ENCODE measurements at regions of chr1 and their contacts with region 1.

Region 1: DNA sequence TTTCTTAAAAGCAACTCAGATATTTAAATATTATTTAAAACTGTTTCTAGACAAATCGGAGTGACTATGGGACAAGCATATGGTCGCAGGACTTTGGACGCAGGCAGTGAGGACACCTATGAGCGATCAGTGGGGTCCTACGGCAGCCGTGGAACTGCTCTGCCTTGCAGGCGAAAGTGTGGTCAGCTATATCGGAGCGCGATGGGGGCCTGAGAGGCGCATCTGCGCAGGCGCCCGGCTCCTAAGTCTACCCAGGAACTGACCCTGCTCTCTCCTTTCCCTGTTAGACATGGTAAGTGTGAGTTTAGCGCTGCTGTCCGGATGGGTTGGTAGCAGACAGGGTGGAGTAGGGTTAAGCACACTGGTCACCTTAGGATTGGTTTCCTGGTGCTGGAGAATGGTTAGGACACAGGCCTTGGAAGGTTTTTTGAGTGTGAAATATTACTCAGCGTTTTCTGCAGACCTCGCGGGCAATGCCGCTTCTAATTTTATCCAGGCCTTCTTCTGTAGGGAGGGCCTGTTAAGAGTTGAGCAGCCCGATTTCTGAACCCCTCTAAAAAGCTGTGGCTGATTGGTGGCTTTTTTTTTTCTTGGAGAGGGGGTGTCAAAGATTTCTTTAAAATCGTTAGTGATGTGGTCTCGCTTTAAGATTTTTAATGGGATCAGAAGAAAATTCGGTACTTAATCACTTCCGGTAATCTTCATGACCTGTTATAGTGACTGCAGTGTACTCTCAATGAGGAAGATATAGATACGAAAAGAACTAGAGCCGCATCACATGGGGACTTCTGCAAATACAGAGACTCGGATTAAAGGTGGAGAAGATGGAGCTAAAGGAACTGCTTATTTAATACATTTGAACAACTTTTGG is at the start of gene RABGGTB:
- DNase-seq: peak; percentile 99
- H3K4me3 ChIP-seq: peak within 1 kb of the TSS; percentile 62 to 99 (median 96)
- H3K27ac ChIP-seq: peak within 1 kb of the TSS; percentile 83
- H3K4me1 ChIP-seq: peaks cover 33% of the 10 kb centered on the region
- H3K27me3 ChIP-seq: no peaks in the 10 kb centered on the region
- CTCF ChIP-seq: no peak
- POLR2A ChIP-seq: peak; percentile 100
- total RNA-seq, gene RABGGTB: 103 and 114 TPM in 2 replicates

Region 2: GRCh38 chr1:74236440-74236839 is 1549.8 kb before region 1 on chr1:
- CTCF ChIA-PET with region 1: no interaction called
- POLR2A ChIA-PET with region 1: no interaction called
- dilution Hi-C with region 1: no loop called
- intact Hi-C with region 1: no loop called
- DNase-seq: no peak
- H3K4me3 ChIP-seq: no peak overlapping the region
- H3K27ac ChIP-seq: no peak overlapping the region
- H3K4me1 ChIP-seq: no peaks in the 10 kb centered on the region
- H3K27me3 ChIP-seq: no peaks in the 10 kb centered on the region
- CTCF ChIP-seq: no peak
- POLR2A ChIP-seq: no peak

Region 3: DNA sequence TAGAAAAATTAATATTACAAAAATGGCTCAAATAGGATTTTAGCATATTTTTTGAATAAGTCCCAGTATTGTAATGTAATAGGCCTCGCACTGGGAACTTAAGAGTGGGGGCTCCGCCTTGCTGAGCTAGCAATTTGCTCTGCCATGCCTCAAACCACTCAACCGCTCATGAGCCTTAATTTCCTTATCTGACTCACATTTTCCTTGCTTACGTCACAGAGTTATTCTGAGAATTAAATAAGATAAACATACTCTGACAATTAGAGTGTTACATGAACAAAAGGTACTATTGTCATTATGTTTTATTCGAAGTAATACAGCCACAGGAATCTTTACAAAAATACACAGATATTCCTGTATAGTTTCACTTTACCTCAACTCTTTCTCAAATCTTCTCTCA is 283.4 kb before region 1 on chr1:
- CTCF ChIA-PET with region 1: no interaction called
- POLR2A ChIA-PET with region 1: no interaction called
- dilution Hi-C with region 1: no loop called
- intact Hi-C with region 1: no loop called
- DNase-seq: peak; percentile 94
- H3K4me3 ChIP-seq: peak overlapping the region in 1 of 3 experiments; percentile 11
- H3K27ac ChIP-seq: peak overlapping the region; percentile 85
- H3K4me1 ChIP-seq: peaks cover 13% of the 10 kb centered on the region
- H3K27me3 ChIP-seq: no peaks in the 10 kb centered on the region
- CTCF ChIP-seq: no peak
- POLR2A ChIP-seq: no peak

Region 4: DNA sequence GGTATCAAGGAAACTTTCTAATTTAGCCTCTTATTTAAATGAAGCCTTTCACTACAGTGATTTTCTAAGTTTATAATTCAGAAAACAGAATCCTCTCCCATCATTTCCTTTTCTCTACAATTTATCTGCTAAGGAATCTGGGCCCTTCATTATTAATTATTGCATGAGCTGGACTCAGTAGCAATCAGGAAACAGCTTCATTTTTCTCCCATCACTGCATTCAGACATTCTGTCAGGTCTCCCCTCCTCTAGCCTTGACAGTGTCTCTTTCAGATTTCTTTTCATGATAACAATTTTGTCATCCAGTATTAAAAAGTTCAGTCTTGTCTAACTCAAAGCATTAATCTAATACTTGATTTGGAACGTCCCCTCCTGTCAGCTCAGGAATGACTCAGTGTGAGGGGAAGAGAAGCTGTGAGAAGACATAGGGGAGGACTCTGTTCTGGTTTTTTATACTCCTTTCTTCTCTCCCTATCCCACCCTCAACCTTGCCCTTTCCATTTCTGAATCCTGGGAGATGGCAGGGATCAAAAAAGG is 203.4 kb before region 1 on chr1:
- CTCF ChIA-PET with region 1: no interaction called
- POLR2A ChIA-PET with region 1: no interaction called
- dilution Hi-C with region 1: no loop called
- intact Hi-C with region 1: no loop called
- DNase-seq: peak; percentile 52
- H3K4me3 ChIP-seq: no peak overlapping the region
- H3K27ac ChIP-seq: no peak overlapping the region
- H3K4me1 ChIP-seq: peaks cover 28% of the 10 kb centered on the region
- H3K27me3 ChIP-seq: no peaks in the 10 kb centered on the region
- CTCF ChIP-seq: peak in 1 of 2 donors; percentile 19
- POLR2A ChIP-seq: no peak

Region 5: DNA sequence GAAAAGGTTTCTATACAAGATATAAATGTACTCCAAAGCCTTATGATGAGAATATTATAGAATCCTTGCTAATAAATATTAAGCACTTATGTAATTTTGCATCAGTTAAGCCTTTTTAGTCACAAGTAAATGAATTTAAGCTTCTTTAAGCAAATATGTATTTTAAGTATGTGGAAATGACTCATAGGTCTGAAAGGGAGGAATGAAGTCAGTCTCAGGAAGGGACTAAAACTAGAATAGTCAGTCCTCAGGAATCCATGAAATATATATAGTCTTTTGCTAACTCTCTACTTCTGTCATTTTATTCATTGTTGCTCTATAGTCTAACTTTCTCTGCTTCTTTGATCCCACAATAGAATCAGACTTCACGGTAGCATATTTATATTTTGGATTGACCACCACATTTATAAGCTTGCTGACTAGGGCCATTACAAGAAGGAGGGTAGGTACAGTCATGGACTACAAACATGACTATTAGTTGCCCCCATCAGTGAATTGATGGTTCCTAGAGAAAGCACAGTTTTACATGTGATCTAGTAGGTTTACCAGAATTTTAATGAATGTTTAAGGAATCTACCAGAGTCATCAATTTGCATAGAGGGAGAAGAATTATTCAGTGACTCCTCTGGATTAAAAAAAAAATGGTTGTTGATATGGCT is 20.4 kb before region 1 on chr1:
- CTCF ChIA-PET with region 1: interaction called, 8 read pairs
- POLR2A ChIA-PET with region 1: interaction called, 3 read pairs
- dilution Hi-C with region 1: no loop called
- intact Hi-C with region 1: loop called (anchors 1 kb)
- DNase-seq: peak; percentile 78
- H3K4me3 ChIP-seq: peak overlapping the region in 1 of 3 experiments; percentile 27
- H3K27ac ChIP-seq: peak overlapping the region; percentile 86
- H3K4me1 ChIP-seq: peaks cover 14% of the 10 kb centered on the region
- H3K27me3 ChIP-seq: no peaks in the 10 kb centered on the region
- CTCF ChIP-seq: no peak
- POLR2A ChIP-seq: no peak

Region 6: DNA sequence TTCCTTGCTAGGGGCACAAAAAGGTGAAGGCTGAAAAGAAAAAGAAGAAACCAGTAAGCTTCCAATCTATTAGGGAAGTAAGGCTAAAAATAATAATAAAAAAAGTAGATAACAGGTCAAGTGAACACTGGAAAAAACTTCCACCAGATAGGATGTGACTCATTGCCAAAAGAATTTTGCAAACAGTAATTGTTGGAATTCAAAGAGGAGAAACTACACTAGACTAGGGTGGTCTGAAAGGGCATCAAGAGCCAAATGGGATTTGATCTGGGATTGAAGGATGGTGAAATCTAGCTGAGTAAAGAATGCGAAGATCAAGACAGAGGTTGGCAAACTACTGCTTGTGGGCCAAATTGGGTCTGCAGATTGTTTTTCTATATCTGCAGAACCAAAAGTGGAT is 282.3 kb after region 1 on chr1:
- CTCF ChIA-PET with region 1: no interaction called
- POLR2A ChIA-PET with region 1: no interaction called
- dilution Hi-C with region 1: no loop called
- intact Hi-C with region 1: loop called (anchors 5 kb)
- DNase-seq: peak; percentile 87
- H3K4me3 ChIP-seq: no peak overlapping the region
- H3K27ac ChIP-seq: peak overlapping the region; percentile 53
- H3K4me1 ChIP-seq: peaks cover 33% of the 10 kb centered on the region
- H3K27me3 ChIP-seq: no peaks in the 10 kb centered on the region
- CTCF ChIP-seq: no peak
- POLR2A ChIP-seq: no peak